PC-9 (cell line): ENCODE measurements at regions of chr3 and their contacts with region 1.

Region 1: DNA sequence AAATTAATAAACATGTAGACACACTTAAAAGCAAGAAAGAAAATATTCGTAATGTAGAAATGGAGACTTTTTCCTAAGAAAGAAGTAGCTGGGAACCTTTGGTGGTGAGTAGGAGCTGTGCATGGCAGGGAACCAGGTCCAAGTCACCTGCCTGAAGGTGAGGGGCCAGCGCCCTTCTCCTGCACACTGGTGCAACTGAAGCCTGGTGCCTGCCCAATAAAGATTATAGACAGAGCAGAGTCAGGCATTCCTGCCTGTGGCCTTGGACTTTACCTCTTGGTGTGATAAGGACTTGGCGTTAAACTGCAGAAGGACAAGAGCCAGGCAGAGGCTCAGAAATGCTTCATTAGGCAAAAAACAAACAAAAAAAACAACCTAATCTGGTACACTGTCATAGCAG is 14.2 kb downstream of the CFAP91 start:
- DNase-seq: no peak
- H3K4me3 ChIP-seq: no peak overlapping the region
- H3K27ac ChIP-seq: no peak overlapping the region
- H3K4me1 ChIP-seq: no peaks in the 10 kb centered on the region
- H3K27me3 ChIP-seq: no peaks in the 10 kb centered on the region
- CTCF ChIP-seq: no peak

Region 2: DNA sequence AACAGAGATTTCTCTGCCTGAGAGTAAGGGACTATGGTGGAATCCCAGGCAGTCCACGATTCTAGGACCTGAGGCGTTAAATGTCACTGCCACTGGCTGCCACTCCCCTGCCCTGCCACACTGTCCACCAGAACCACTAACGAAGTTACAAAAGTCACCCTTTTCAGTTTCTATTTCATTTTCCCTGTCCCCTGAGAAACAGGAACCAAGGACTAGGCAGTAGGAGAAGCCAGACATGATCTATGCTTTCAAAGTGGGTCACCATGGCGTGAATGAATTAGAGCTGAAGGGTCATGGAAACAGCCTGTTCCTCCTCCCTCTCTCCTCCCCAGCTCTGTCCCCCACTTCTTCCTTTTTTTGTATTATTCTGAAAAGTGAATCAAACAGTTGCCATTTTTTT is 146.8 kb before region 1 on chr3:
- CTCF ChIA-PET with region 1: no interaction called
- POLR2A ChIA-PET with region 1: no interaction called
- intact Hi-C with region 1: no loop called
- DNase-seq: no peak
- H3K4me3 ChIP-seq: no peak overlapping the region
- H3K27ac ChIP-seq: no peak overlapping the region
- H3K4me1 ChIP-seq: no peaks in the 10 kb centered on the region
- H3K27me3 ChIP-seq: peaks cover 18% of the 10 kb centered on the region
- CTCF ChIP-seq: no peak

Region 3: GRCh38 chr3:120498556-120499346 is 781.8 kb after region 1 on chr3:
- CTCF ChIA-PET with region 1: no interaction called
- POLR2A ChIA-PET with region 1: interaction called, 11 read pairs
- intact Hi-C with region 1: no loop called
- DNase-seq: peak; percentile 46 to 82
- H3K4me3 ChIP-seq: no peak overlapping the region
- H3K27ac ChIP-seq: peak overlapping the region; percentile 20
- H3K4me1 ChIP-seq: peaks cover 22% of the 10 kb centered on the region
- H3K27me3 ChIP-seq: no peaks in the 10 kb centered on the region
- CTCF ChIP-seq: no peak